ENCODE measurements at regions of chr17 and their contacts with region 1.

Region 1: GRCh38 chr17:50425682-50426471 is at the start of gene ACSF2:
- DNase-seq: peak; percentile 19 to 72
- H3K4me3 ChIP-seq: peak within 1 kb of the TSS; percentile 55 to 78 (median 68)
- H3K27ac ChIP-seq: no peak within 1 kb of the TSS
- H3K4me1 ChIP-seq: peaks cover 6 to 13% (median 10%) of the 10 kb centered on the region in 4 experiments
- H3K27me3 ChIP-seq: peaks cover 0 to 2% (median 0%) of the 10 kb centered on the region in 4 experiments; a peak in 3 of 7 replicates
- CTCF ChIP-seq: no peak
- EP300 ChIP-seq: no peak
- POLR2A ChIP-seq: no peak
- RAD21 ChIP-seq: no peak
- total RNA-seq, gene ACSF2: 16.1 and 16.3 TPM in 2 replicates

Region 2: DNA sequence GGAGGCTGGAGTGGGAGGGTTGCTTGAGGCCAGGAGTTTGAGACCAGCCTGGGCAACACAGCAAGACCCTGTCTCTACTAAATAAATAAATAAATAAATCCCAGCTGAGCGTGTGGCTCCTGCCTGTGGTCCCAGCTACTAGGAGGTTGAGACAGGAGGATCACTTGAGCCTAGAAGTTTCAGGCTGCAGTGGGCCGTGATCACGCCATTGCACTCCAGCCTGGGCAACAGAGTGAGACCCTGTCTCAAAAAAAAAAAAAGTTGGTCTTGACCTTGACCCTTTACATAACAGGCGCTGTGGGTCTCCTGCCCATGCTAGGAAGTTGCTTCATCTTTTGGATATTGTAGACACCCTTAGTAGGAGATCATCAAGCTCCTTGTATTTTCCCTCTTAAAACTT is 11.5 kb after region 1 on chr17:
- CTCF ChIA-PET with region 1: interaction called, 20 read pairs
- POLR2A ChIA-PET with region 1: no interaction called
- DNase-seq: no peak
- H3K4me3 ChIP-seq: no peak overlapping the region
- H3K27ac ChIP-seq: no peak overlapping the region
- H3K4me1 ChIP-seq: peaks cover 0 to 6% (median 0%) of the 10 kb centered on the region in 4 experiments; a peak in 2 of 7 replicates
- H3K27me3 ChIP-seq: no peaks in the 10 kb centered on the region; a peak in 1 of 7 replicates
- CTCF ChIP-seq: no peak
- EP300 ChIP-seq: no peak
- POLR2A ChIP-seq: no peak
- RAD21 ChIP-seq: no peak

Measured in H1 (cell line).